Naive thymus-derived CD4-positive, alpha-beta T cell (primary cell): ENCODE measurements at regions of chr10 and their contacts with region 1.

Region 1: DNA sequence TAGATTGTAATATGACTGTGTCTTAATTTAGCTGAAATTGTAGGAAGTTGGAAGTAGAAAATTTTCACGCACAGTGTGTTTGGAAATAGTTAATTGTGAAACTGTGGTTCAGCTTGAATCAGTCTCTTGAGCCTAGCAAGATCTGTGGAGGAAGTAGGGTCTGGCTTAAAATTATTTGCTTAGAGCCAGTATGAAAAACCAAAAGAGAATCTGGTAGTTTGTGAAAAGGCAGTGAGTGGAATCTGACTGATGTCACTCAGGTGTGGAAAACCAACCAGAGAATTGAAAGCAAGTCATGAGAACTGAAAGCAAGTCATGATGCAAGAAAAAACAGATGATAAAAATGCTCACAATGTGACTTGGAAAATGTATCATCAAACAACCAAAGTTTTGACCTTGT is 11.5 kb downstream of the LIPJ start:
- DNase-seq: no peak
- ATAC-seq: peak; percentile 60
- H3K4me3 ChIP-seq: no peak overlapping the region
- H3K4me3 Mint-ChIP-seq: no peak overlapping the region
- H3K27ac ChIP-seq: no peak overlapping the region
- H3K27ac Mint-ChIP-seq: no peak overlapping the region
- H3K4me1 ChIP-seq: no peaks in the 10 kb centered on the region
- H3K4me1 Mint-ChIP-seq: no peaks in the 10 kb centered on the region
- H3K27me3 ChIP-seq: no peaks in the 10 kb centered on the region
- H3K27me3 Mint-ChIP-seq: peaks cover 0 to 10% (median 5%) of the 10 kb centered on the region in 5 donors

Region 2: GRCh38 chr10:88528201-88528600 is 69.9 kb before region 1 on chr10:
- CTCF ChIA-PET with region 1: no interaction called
- POLR2A ChIA-PET with region 1: no interaction called
- intact Hi-C with region 1: loop called in 1 of 2 experiments (anchors 2 kb)
- DNase-seq: no peak
- ATAC-seq: no peak
- H3K4me3 ChIP-seq: no peak overlapping the region
- H3K4me3 Mint-ChIP-seq: no peak overlapping the region
- H3K27ac ChIP-seq: no peak overlapping the region
- H3K27ac Mint-ChIP-seq: no peak overlapping the region
- H3K4me1 ChIP-seq: no peaks in the 10 kb centered on the region
- H3K4me1 Mint-ChIP-seq: peaks cover 0 to 5% (median 0%) of the 10 kb centered on the region in 7 donors
- H3K27me3 ChIP-seq: no peaks in the 10 kb centered on the region
- H3K27me3 Mint-ChIP-seq: peaks cover 0 to 13% (median 0%) of the 10 kb centered on the region in 5 donors